OCI-LY7 (cell line): ENCODE measurements at regions of chr16 and their contacts with region 1.

Region 1: GRCh38 chr16:82263521-82264143 is 93.6 kb upstream of the MPHOSPH6 start:
- DNase-seq: peak; percentile 64
- H3K4me3 ChIP-seq: no peak overlapping the region
- H3K27ac ChIP-seq: no peak overlapping the region
- H3K4me1 ChIP-seq: no peaks in the 10 kb centered on the region
- CTCF ChIP-seq: peak; percentile 99

Region 2: DNA sequence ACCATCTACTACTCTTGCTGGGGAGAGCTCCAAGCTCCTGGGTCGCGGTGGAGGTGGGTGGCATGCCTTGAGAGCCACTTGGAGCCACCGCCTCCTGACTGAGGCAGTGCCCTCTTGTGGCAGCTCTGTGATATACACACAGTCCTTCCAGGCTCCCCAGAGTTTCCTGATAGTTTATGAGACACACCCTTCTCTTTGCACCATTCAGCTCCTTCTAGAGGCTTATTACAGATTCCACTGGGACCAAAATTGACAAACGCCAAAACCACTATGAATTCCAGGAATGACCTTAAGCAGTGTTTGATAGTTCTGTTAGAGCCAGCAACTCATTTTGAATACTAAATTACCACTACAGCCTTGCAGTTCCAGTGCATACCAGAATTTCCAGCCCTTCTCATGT is 193.1 kb after region 1 on chr16:
- CTCF ChIA-PET with region 1: no interaction called
- POLR2A ChIA-PET with region 1: no interaction called
- intact Hi-C with region 1: loop called (anchors 1 kb)
- DNase-seq: peak; percentile 54
- H3K4me3 ChIP-seq: no peak overlapping the region
- H3K27ac ChIP-seq: no peak overlapping the region
- H3K4me1 ChIP-seq: no peaks in the 10 kb centered on the region
- CTCF ChIP-seq: peak; percentile 84

Region 3: GRCh38 chr16:82639666-82640336 is 376.2 kb after region 1 on chr16:
- CTCF ChIA-PET with region 1: no interaction called
- POLR2A ChIA-PET with region 1: no interaction called
- intact Hi-C with region 1: loop called (anchors 5 kb)
- DNase-seq: peak; percentile 49
- H3K4me3 ChIP-seq: no peak overlapping the region
- H3K27ac ChIP-seq: no peak overlapping the region
- H3K4me1 ChIP-seq: no peaks in the 10 kb centered on the region
- CTCF ChIP-seq: peak; percentile 92

Region 4: DNA sequence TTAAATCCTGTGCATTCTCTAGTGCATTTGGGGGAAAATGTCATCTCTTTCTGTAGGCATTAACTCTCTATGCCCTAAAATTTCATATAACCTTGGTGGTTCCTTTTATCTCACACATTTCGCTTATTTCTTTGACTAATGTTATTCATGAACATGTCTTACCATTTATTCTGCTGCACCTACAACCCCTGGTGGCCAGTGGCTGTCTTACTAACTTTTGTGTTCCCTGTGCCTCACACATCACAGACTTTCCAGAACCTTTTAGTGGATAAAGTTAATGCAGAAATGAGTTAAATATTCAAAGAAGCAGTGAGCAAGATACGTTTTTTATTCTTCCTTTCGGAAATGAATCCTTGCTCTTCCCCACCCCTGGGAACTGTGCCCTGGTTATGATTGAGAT is 475.1 kb after region 1 on chr16:
- CTCF ChIA-PET with region 1: no interaction called
- POLR2A ChIA-PET with region 1: no interaction called
- intact Hi-C with region 1: no loop called
- DNase-seq: no peak
- H3K4me3 ChIP-seq: no peak overlapping the region
- H3K27ac ChIP-seq: no peak overlapping the region
- H3K4me1 ChIP-seq: no peaks in the 10 kb centered on the region
- CTCF ChIP-seq: peak; percentile 22; the same call in 1 of the 2 replicates

Region 5: GRCh38 chr16:83215406-83216001 is 951.9 kb after region 1 on chr16:
- CTCF ChIA-PET with region 1: no interaction called
- POLR2A ChIA-PET with region 1: no interaction called
- intact Hi-C with region 1: loop called (anchors 5 kb)
- DNase-seq: peak; percentile 75
- H3K4me3 ChIP-seq: no peak overlapping the region
- H3K27ac ChIP-seq: no peak overlapping the region
- H3K4me1 ChIP-seq: peaks cover 21% of the 10 kb centered on the region
- CTCF ChIP-seq: peak; percentile 92